ENCODE measurements at regions of chr3 and their contacts with region 1.

Region 1: DNA sequence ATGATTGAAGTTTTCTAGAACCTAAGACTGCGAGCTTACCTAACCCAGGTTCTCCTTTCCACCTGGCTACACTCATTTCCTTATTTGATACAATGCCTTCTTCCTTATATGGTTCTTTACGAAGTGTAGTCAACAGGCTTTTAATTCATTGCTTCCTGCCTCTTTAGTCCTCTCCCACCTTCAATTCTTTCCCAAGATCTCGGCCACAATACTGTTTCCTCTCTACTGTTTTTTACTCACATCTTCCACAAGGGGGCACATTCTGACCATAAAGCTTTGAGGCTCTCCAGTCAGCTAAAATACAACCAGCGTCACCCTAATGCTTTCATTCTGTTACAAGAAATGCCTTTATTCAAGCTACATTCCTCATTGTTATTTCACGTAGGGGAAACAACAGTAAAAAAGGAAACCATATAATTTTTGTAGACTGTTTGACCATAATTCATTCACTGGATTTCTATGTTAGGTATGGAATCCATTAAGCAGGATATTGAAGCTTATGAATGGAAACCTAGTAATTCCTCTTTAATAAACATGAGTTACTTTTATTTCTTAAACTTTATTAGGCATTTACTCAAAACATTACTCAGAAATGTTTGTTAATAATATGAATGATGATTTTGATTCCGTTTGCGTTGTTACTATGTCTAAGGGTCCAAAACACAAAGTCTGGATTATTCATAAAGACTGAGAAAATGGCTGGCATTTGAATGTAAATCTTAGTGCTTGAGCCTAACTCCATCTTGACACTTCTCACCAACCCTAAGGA is 29.5 kb upstream of the VEPH1 start:
- DNase-seq: peak; percentile 74
- H3K4me3 Mint-ChIP-seq: no peak overlapping the region
- H3K27ac Mint-ChIP-seq: no peak overlapping the region
- H3K4me1 Mint-ChIP-seq: no peaks in the 10 kb centered on the region
- H3K27me3 Mint-ChIP-seq: no peaks in the 10 kb centered on the region
- CTCF ChIP-seq: peak; percentile 94

Region 2: DNA sequence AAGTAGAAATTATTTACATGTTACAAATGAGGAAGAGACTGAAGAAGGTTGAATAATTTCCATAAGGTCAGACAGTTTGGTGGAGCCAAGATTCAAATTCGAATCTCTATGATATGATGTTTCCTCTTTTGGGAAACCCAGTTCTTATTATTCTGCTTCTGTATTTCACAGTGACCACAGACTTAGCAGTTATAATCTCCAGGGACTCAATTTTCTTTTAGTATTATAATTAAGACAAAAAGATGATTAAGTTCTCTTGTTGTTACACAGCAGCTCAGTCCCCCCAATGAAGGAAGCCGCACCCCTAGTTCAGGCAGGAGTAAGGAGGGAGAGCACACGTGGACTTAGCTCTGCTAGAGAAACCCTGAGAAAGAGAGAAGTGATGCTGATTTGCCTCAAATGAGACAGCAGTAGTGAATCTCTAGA is 503.3 kb before region 1 on chr3:
- CTCF ChIA-PET with region 1: no interaction called
- intact Hi-C with region 1: no loop called
- DNase-seq: no peak
- H3K4me3 Mint-ChIP-seq: no peak overlapping the region
- H3K27ac Mint-ChIP-seq: no peak overlapping the region
- H3K4me1 Mint-ChIP-seq: no peaks in the 10 kb centered on the region
- H3K27me3 Mint-ChIP-seq: no peaks in the 10 kb centered on the region
- CTCF ChIP-seq: no peak

Region 3: GRCh38 chr3:157499342-157499963 is 33.3 kb before region 1 on chr3:
- CTCF ChIA-PET with region 1: interaction called, 16 read pairs
- intact Hi-C with region 1: no loop called
- DNase-seq: peak; percentile 93
- H3K4me3 Mint-ChIP-seq: peak overlapping the region; percentile 81
- H3K27ac Mint-ChIP-seq: peak overlapping the region; percentile 95
- H3K4me1 Mint-ChIP-seq: peaks cover 80% of the 10 kb centered on the region
- H3K27me3 Mint-ChIP-seq: no peaks in the 10 kb centered on the region
- CTCF ChIP-seq: no peak

Region 4: DNA sequence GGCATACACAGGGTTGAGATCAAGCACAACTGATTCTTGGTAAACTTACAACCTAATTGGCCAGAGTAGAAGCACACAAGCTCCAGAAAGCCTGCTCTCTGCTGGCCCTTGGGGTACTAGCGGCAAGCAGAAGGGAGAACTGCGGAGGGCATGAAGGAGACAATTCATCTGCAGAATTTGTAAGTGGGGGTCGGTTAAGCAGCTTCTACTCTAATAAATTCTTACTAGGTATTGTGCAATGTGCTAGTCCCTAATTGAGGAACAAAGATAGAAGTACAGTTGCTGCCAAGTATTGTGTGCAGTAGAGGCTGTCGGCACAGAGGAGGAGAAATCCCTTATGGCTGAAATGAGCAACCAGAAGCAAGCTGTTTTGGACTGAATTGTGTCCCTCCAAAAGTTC is 61.7 kb after region 1 on chr3:
- CTCF ChIA-PET with region 1: interaction called, 13 read pairs
- intact Hi-C with region 1: no loop called
- DNase-seq: no peak
- H3K4me3 Mint-ChIP-seq: no peak overlapping the region
- H3K27ac Mint-ChIP-seq: no peak overlapping the region
- H3K4me1 Mint-ChIP-seq: no peaks in the 10 kb centered on the region
- H3K27me3 Mint-ChIP-seq: peaks cover 8% of the 10 kb centered on the region
- CTCF ChIP-seq: no peak

Region 5: GRCh38 chr3:157695586-157695985 is 162.9 kb after region 1 on chr3:
- CTCF ChIA-PET with region 1: interaction called, 7 read pairs
- intact Hi-C with region 1: loop called (anchors 5 kb)
- DNase-seq: no peak
- H3K4me3 Mint-ChIP-seq: no peak overlapping the region
- H3K27ac Mint-ChIP-seq: no peak overlapping the region
- H3K4me1 Mint-ChIP-seq: no peaks in the 10 kb centered on the region
- H3K27me3 Mint-ChIP-seq: peaks cover 19% of the 10 kb centered on the region
- CTCF ChIP-seq: no peak

Region 6: DNA sequence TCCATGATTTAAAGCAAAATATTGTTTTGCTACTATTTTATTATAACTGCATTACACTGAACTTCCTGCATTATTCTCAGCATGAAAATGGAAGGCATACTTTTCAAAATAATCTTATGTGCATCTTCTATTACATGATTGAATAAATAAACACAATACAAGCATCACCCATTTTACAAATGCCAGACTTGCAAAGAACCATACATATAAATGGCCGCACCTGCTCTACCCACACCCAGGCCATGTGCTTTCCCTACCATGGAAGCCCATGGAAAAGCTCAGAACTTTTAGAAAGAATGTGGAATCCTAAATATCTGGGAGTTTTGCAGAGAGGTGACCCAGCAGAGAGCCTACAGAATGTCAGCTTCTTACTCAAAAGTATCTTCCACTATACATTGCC is 446.3 kb after region 1 on chr3:
- CTCF ChIA-PET with region 1: no interaction called
- intact Hi-C with region 1: loop called (anchors 10 kb)
- DNase-seq: no peak
- H3K4me3 Mint-ChIP-seq: no peak overlapping the region
- H3K27ac Mint-ChIP-seq: no peak overlapping the region
- H3K4me1 Mint-ChIP-seq: no peaks in the 10 kb centered on the region
- H3K27me3 Mint-ChIP-seq: no peaks in the 10 kb centered on the region
- CTCF ChIP-seq: no peak

Region 7: GRCh38 chr3:158313338-158313927 is 780.7 kb after region 1 on chr3:
- CTCF ChIA-PET with region 1: no interaction called
- intact Hi-C with region 1: loop called (anchors 10 kb)
- DNase-seq: peak; percentile 29
- H3K4me3 Mint-ChIP-seq: no peak overlapping the region
- H3K27ac Mint-ChIP-seq: no peak overlapping the region
- H3K4me1 Mint-ChIP-seq: no peaks in the 10 kb centered on the region
- H3K27me3 Mint-ChIP-seq: no peaks in the 10 kb centered on the region
- CTCF ChIP-seq: peak; percentile 42